ENCODE measurements at regions of chr18 and their contacts with region 1.

Region 1: DNA sequence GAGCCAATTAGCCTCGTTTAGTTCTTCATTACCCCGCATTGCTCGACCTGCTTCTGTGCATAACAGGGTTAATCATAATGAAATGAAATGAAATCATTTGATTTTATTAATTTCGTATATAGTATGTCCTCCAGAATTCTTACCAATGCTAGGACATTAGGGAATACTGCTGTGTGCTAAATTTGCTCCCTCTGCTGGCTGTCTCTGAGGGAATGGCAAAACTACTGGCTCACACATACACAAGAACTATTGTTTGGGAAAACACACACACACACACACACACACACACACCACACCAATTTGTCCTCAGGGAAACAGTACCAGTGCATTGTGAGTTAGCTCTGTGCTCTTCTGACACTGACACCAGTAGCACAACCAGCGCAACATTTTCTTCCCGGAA is 273.3 kb upstream of the TCF4 start:
- DNase-seq: peak; percentile 49
- H3K4me3 ChIP-seq: no peak overlapping the region
- H3K27ac ChIP-seq: no peak overlapping the region
- H3K4me1 ChIP-seq: peaks cover 12% of the 10 kb centered on the region
- H3K27me3 ChIP-seq: no peaks in the 10 kb centered on the region
- CTCF ChIP-seq: peak; percentile 54 to 73

Region 2: DNA sequence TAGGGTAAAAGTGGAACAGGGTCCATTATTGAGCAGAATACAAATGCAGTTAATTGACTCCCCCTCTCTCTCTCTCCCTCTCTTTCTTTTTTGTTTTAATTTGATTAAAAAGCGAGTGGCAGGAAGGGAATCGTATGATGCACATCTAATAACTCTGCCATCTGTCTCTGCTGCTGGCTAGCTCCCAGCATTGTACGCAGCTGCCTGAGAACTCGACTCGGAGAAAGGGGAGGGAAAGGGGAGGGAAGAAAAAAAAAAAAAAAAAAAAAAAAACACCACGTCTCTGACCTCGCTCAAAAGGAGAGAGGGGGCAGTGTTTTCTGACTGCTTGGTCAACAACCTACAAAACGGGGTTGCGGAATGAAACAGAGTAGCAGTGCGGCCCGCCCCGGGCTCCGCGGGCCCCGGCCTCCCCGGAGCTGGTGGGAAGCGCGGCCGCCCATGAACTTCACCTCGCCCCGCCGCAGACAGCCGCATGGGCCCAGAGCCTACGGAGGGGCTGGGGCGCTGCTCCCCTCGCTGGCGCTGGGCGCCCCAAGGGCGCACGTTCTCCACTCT is 539.0 kb before region 1 on chr18:
- CTCF ChIA-PET with region 1: interaction called, 29 read pairs
- dilution Hi-C with region 1: no loop called
- in situ Hi-C with region 1: no loop called
- intact Hi-C with region 1: no loop called
- DNase-seq: peak; percentile 78
- H3K4me3 ChIP-seq: peak overlapping the region; percentile 57 to 90 (median 70)
- H3K27ac ChIP-seq: peak overlapping the region; percentile 45
- H3K4me1 ChIP-seq: peaks cover 24% of the 10 kb centered on the region
- H3K27me3 ChIP-seq: no peaks in the 10 kb centered on the region
- CTCF ChIP-seq: no peak

Region 3: DNA sequence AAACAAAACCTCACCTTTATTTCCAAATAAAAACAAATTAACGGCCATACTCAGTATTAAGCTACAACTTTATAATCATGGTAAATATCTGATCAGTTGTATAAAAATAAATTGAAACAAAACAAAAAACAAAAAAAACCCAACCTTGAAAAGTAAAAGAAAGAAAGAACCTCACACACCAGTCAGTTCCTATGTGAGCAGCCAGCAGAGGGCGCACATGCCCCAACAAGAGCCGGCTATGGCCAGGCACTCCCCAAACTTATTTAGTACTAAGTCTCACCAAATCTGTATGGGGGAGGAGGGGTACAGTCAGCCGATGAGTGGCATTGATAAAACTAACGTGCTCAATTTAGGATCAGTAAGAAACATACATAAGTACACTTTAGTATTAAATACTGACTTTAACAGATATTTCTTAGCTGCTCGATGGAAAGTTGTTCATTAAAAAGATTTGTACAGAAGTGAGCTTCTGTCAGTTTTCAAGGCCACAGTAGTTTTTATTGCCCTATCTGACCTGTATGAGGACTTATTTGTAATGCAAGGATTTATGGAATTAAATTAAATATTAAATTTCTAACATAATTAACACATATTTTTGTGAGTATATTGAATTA is 445.9 kb before region 1 on chr18:
- CTCF ChIA-PET with region 1: no interaction called
- dilution Hi-C with region 1: no loop called
- in situ Hi-C with region 1: loop called in 1 of 2 experiments (anchors 10 kb)
- intact Hi-C with region 1: loop called (anchors 1 kb)
- DNase-seq: peak; percentile 43
- H3K4me3 ChIP-seq: no peak overlapping the region
- H3K27ac ChIP-seq: no peak overlapping the region
- H3K4me1 ChIP-seq: no peaks in the 10 kb centered on the region
- H3K27me3 ChIP-seq: no peaks in the 10 kb centered on the region
- CTCF ChIP-seq: peak; percentile 85 to 90

Region 4: GRCh38 chr18:55577812-55578539 is 283.3 kb before region 1 on chr18:
- CTCF ChIA-PET with region 1: no interaction called
- dilution Hi-C with region 1: no loop called
- in situ Hi-C with region 1: no loop called
- intact Hi-C with region 1: loop called (anchors 2 kb)
- DNase-seq: no peak
- H3K4me3 ChIP-seq: no peak overlapping the region
- H3K27ac ChIP-seq: no peak overlapping the region
- H3K4me1 ChIP-seq: no peaks in the 10 kb centered on the region
- H3K27me3 ChIP-seq: no peaks in the 10 kb centered on the region
- CTCF ChIP-seq: peak; percentile 8 to 38

Region 5: GRCh38 chr18:55790296-55790695 is 71.0 kb before region 1 on chr18:
- CTCF ChIA-PET with region 1: no interaction called
- dilution Hi-C with region 1: loop called (anchors 5 kb)
- in situ Hi-C with region 1: no loop called
- intact Hi-C with region 1: loop called (anchors 2 kb)
- DNase-seq: peak; percentile 72
- H3K4me3 ChIP-seq: no peak overlapping the region
- H3K27ac ChIP-seq: no peak overlapping the region
- H3K4me1 ChIP-seq: peaks cover 17% of the 10 kb centered on the region
- H3K27me3 ChIP-seq: no peaks in the 10 kb centered on the region
- CTCF ChIP-seq: no peak

Region 6: GRCh38 chr18:55910296-55910695 is 49.0 kb after region 1 on chr18:
- CTCF ChIA-PET with region 1: no interaction called
- dilution Hi-C with region 1: loop called (anchors 5 kb)
- in situ Hi-C with region 1: no loop called
- intact Hi-C with region 1: no loop called
- DNase-seq: no peak
- H3K4me3 ChIP-seq: no peak overlapping the region
- H3K27ac ChIP-seq: no peak overlapping the region
- H3K4me1 ChIP-seq: no peaks in the 10 kb centered on the region
- H3K27me3 ChIP-seq: no peaks in the 10 kb centered on the region
- CTCF ChIP-seq: no peak

Measured in mammary epithelial cell (primary cell).